Calu3 (cell line): ENCODE measurements at regions of chr12 and their contacts with region 1.

Region 1: DNA sequence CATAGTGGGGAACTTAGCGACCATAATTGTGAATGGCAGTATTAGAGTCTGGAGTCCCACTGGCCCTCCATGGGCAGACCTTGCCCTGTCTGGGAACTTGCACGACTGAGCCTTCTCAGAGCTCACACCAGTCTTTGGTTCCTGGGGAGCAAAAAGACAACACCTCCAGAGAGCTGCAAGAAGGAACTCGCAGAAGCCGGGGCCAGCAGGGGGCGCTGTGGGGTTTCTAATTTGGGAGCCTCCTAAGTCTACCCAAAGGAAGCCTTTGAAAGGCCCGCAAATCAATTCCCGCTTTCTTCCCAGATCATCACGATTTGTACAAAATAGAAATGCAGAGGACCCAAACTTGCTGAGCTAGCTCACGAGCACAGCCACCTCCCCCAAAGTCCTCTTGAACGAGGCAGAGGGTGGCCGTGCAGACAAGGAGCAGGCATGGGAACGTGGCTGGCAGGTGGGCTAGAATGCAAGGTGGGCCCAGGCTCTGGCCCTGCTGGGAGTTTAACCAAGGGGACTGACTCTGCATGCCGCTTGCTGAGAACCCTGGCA is 46.3 kb upstream of the FBXO21 start:
- DNase-seq: peak; percentile 93
- H3K4me3 Mint-ChIP-seq: no peak overlapping the region
- H3K27ac Mint-ChIP-seq: no peak overlapping the region
- H3K4me1 Mint-ChIP-seq: no peaks in the 10 kb centered on the region
- H3K27me3 Mint-ChIP-seq: peaks cover 37% of the 10 kb centered on the region
- CTCF ChIP-seq: peak; percentile 94

Region 2: GRCh38 chr12:117587631-117588287 is 351.2 kb after region 1 on chr12:
- CTCF ChIA-PET with region 1: interaction called, 3 read pairs
- intact Hi-C with region 1: loop called (anchors 1 kb)
- DNase-seq: peak; percentile 77
- H3K4me3 Mint-ChIP-seq: no peak overlapping the region
- H3K27ac Mint-ChIP-seq: no peak overlapping the region
- H3K4me1 Mint-ChIP-seq: no peaks in the 10 kb centered on the region
- H3K27me3 Mint-ChIP-seq: peaks cover 56% of the 10 kb centered on the region
- CTCF ChIP-seq: peak; percentile 90

Region 3: DNA sequence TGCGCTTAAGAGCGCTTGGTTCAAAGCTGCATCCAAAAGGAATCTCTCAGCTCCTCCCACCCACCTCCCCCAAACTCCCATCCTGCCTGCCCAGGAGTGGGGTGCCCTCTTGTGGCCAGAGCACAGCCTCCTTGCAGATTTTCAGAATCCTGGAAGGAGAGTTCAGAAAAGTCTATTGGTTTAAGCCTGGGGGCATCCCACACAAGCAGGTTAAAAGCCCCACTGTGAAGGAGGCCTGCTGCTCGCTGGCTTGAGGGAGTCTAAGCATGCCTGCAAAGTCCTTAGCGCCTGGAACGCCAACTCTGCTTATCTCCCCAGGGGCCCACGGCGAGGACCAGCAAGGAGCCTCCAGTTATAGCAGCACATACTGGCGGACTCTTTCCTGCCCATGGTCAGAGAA is 435.2 kb after region 1 on chr12:
- CTCF ChIA-PET with region 1: no interaction called
- intact Hi-C with region 1: loop called (anchors 5 kb)
- DNase-seq: peak; percentile 72
- H3K4me3 Mint-ChIP-seq: no peak overlapping the region
- H3K27ac Mint-ChIP-seq: no peak overlapping the region
- H3K4me1 Mint-ChIP-seq: no peaks in the 10 kb centered on the region
- H3K27me3 Mint-ChIP-seq: peaks cover 88% of the 10 kb centered on the region
- CTCF ChIP-seq: peak; percentile 59

Region 4: DNA sequence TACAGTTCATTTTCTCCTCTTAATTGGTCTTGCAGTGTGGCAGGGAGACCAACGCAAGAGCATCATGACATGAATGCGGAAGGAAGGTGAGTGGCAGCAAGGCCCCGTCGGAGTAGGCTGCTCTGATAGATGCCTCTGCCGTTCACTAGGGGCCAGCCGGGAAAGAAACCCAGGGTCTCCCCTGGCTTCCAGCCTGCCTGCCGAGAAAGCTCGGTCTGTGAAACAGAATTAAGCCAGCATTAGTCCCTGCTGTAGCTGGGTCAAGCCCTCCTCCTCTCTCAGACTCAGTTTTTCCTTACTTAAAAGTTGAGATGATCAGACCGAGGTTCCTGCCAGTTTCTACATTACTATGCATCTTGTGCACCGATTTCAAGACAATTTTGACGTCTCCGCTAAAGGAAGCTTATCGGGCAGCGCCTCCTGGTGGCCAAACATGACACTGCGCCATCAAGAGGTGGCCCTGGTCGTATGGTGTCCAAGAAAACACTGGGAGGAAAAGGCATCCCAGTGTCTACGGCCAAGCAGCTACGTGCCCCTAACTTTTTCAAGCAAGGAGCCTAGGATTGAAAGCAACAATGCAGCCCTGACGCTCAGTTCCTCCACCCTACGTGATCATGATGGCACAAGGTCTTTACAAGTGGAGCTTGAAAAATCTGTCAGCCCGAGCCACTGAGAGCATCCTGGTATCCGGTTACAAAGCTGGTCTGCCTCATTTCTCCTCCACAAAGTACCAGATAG is 600.6 kb after region 1 on chr12:
- CTCF ChIA-PET with region 1: interaction called, 4 read pairs
- intact Hi-C with region 1: loop called (anchors 1 kb)
- DNase-seq: peak; percentile 84
- H3K4me3 Mint-ChIP-seq: no peak overlapping the region
- H3K27ac Mint-ChIP-seq: no peak overlapping the region
- H3K4me1 Mint-ChIP-seq: peaks cover 7% of the 10 kb centered on the region
- H3K27me3 Mint-ChIP-seq: peaks cover 42% of the 10 kb centered on the region
- CTCF ChIP-seq: peak; percentile 96

Region 5: DNA sequence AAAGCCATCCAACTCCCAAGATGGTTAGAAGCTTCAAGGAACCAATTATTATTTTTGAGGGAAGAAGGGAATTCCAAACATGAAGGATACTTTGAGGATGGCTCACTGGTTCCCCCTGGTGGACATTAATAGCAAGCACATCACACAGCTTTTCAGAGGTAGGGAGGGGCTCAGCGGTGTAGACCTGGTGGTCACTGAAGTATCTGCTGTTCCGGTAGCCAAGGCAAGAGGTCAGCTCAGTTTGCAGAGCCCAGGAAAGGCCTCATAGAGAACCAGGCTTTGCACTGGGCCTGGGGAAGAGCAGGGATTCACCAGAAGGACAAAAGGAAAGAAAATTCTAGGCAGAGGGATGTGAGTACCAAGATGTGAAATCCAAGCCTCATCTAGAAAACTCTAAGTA is 613.5 kb after region 1 on chr12:
- CTCF ChIA-PET with region 1: interaction called, 6 read pairs
- intact Hi-C with region 1: loop called (anchors 5 kb)
- DNase-seq: peak; percentile 49
- H3K4me3 Mint-ChIP-seq: no peak overlapping the region
- H3K27ac Mint-ChIP-seq: no peak overlapping the region
- H3K4me1 Mint-ChIP-seq: peaks cover 25% of the 10 kb centered on the region
- H3K27me3 Mint-ChIP-seq: peaks cover 24% of the 10 kb centered on the region
- CTCF ChIP-seq: peak; percentile 81